IMR-90 (cell line): ENCODE measurements at regions of chr9 and their contacts with region 1.

Region 1: GRCh38 chr9:70587201-70587600 is 172.7 kb upstream of the KLF9 start:
- DNase-seq: peak; percentile 86
- ATAC-seq: peak; percentile 72
- H3K4me3 ChIP-seq: no peak overlapping the region
- H3K27ac ChIP-seq: peak overlapping the region; percentile 80
- H3K4me1 ChIP-seq: peaks cover 26% of the 10 kb centered on the region
- H3K27me3 ChIP-seq: no peaks in the 10 kb centered on the region
- CTCF ChIP-seq: no peak
- POLR2A ChIP-seq: no peak
- RAD21 ChIP-seq: no peak

Region 2: GRCh38 chr9:70535546-70536323 is 51.5 kb before region 1 on chr9:
- CTCF ChIA-PET with region 1: no interaction called
- POLR2A ChIA-PET with region 1: no interaction called
- dilution Hi-C with region 1: no loop called
- in situ Hi-C with region 1: loop called (anchors 5 kb)
- intact Hi-C with region 1: no loop called
- DNase-seq: no peak
- ATAC-seq: no peak
- H3K4me3 ChIP-seq: no peak overlapping the region
- H3K27ac ChIP-seq: no peak overlapping the region
- H3K4me1 ChIP-seq: peaks cover 15% of the 10 kb centered on the region
- H3K27me3 ChIP-seq: no peaks in the 10 kb centered on the region
- CTCF ChIP-seq: no peak
- POLR2A ChIP-seq: no peak
- RAD21 ChIP-seq: no peak

Region 3: GRCh38 chr9:70805949-70806348 is 218.7 kb after region 1 on chr9:
- CTCF ChIA-PET with region 1: no interaction called
- POLR2A ChIA-PET with region 1: no interaction called
- dilution Hi-C with region 1: no loop called
- in situ Hi-C with region 1: no loop called
- intact Hi-C with region 1: no loop called
- DNase-seq: no peak
- ATAC-seq: no peak
- H3K4me3 ChIP-seq: no peak overlapping the region
- H3K27ac ChIP-seq: no peak overlapping the region
- H3K4me1 ChIP-seq: no peaks in the 10 kb centered on the region
- H3K27me3 ChIP-seq: no peaks in the 10 kb centered on the region
- CTCF ChIP-seq: no peak
- POLR2A ChIP-seq: no peak
- RAD21 ChIP-seq: no peak